ENCODE measurements at regions of chr11 and their contacts with region 1.

Region 1: GRCh38 chr11:63681321-63682049 is at the start of gene RTN3:
- DNase-seq: peak; percentile 97 to 99 (median 98)
- ATAC-seq: peak; percentile 95
- H3K4me3 ChIP-seq: peak within 1 kb of the TSS; percentile 86
- H3K4me3 Mint-ChIP-seq: peak within 1 kb of the TSS; percentile 89 to 97 (median 94)
- H3K27ac ChIP-seq: peak within 1 kb of the TSS; percentile 69
- H3K27ac Mint-ChIP-seq: peak within 1 kb of the TSS; percentile 50 to 97 (median 83)
- H3K4me1 ChIP-seq: peaks cover 6 to 17% of the 10 kb centered on the region in 2 donors
- H3K4me1 Mint-ChIP-seq: peaks cover 20 to 30% (median 27%) of the 10 kb centered on the region in 7 donors
- H3K27me3 ChIP-seq: no peaks in the 10 kb centered on the region
- H3K27me3 Mint-ChIP-seq: peaks cover 0 to 12% (median 0%) of the 10 kb centered on the region in 5 donors
- total RNA-seq, gene RTN3: 20.8 to 65.7 (median 34.4) TPM

Region 2: GRCh38 chr11:63553741-63554151 is 127.7 kb before region 1 on chr11:
- CTCF ChIA-PET with region 1: interaction called, 3 read pairs
- POLR2A ChIA-PET with region 1: no interaction called
- intact Hi-C with region 1: loop called in 1 of 2 experiments (anchors 5 kb)
- DNase-seq: peak in 7 of 9 donors; percentile 41 to 61 (median 53)
- ATAC-seq: peak; percentile 85
- H3K4me3 ChIP-seq: peak overlapping the region; percentile 51
- H3K4me3 Mint-ChIP-seq: peak overlapping the region; percentile 78 to 95 (median 88)
- H3K27ac ChIP-seq: peak overlapping the region; percentile 54
- H3K27ac Mint-ChIP-seq: peak overlapping the region; percentile 88 to 100 (median 96)
- H3K4me1 ChIP-seq: peaks cover 35 to 51% of the 10 kb centered on the region in 2 donors
- H3K4me1 Mint-ChIP-seq: peaks cover 33 to 81% (median 77%) of the 10 kb centered on the region in 7 donors
- H3K27me3 ChIP-seq: no peaks in the 10 kb centered on the region
- H3K27me3 Mint-ChIP-seq: no peaks in the 10 kb centered on the region

Region 3: GRCh38 chr11:63738720-63739360 is 57.4 kb after region 1 on chr11:
- CTCF ChIA-PET with region 1: interaction called, 3 read pairs
- POLR2A ChIA-PET with region 1: interaction called, 3 read pairs
- intact Hi-C with region 1: loop called in 1 of 2 experiments (anchors 1 kb)
- DNase-seq: peak in 8 of 9 donors; percentile 23 to 64 (median 46)
- ATAC-seq: peak; percentile 70
- H3K4me3 ChIP-seq: no peak overlapping the region
- H3K4me3 Mint-ChIP-seq: no peak overlapping the region
- H3K27ac ChIP-seq: no peak overlapping the region
- H3K27ac Mint-ChIP-seq: peak overlapping the region in 3 of 9 donors; percentile 29 to 67 (median 45)
- H3K4me1 ChIP-seq: no peaks in the 10 kb centered on the region
- H3K4me1 Mint-ChIP-seq: peaks cover 3 to 8% (median 4%) of the 10 kb centered on the region in 7 donors
- H3K27me3 ChIP-seq: no peaks in the 10 kb centered on the region
- H3K27me3 Mint-ChIP-seq: no peaks in the 10 kb centered on the region

Region 4: GRCh38 chr11:63768237-63769043 is 87.0 kb after region 1 on chr11 and contains the start of gene ZFTA:
- CTCF ChIA-PET with region 1: interaction called, 3 read pairs
- POLR2A ChIA-PET with region 1: no interaction called
- intact Hi-C with region 1: loop called in 1 of 2 experiments (anchors 5 kb)
- DNase-seq: peak; percentile 34 to 79 (median 54)
- ATAC-seq: peak; percentile 84
- H3K4me3 ChIP-seq: peak within 1 kb of the TSS; percentile 77
- H3K4me3 Mint-ChIP-seq: peak within 1 kb of the TSS; percentile 87 to 99 (median 92)
- H3K27ac ChIP-seq: peak within 1 kb of the TSS; percentile 60
- H3K27ac Mint-ChIP-seq: peak within 1 kb of the TSS; percentile 34 to 94 (median 83)
- H3K4me1 ChIP-seq: peaks cover 6 to 9% of the 10 kb centered on the region in 2 donors
- H3K4me1 Mint-ChIP-seq: peaks cover 6 to 14% (median 8%) of the 10 kb centered on the region in 7 donors
- H3K27me3 ChIP-seq: peaks cover 0 to 9% of the 10 kb centered on the region in 2 donors
- H3K27me3 Mint-ChIP-seq: peaks cover 0 to 35% (median 9%) of the 10 kb centered on the region in 5 donors
- total RNA-seq, gene ZFTA: 2.1 to 3.6 (median 2.7) TPM

Region 5: GRCh38 chr11:63802637-63803414 is 121.3 kb after region 1 on chr11:
- CTCF ChIA-PET with region 1: no interaction called
- POLR2A ChIA-PET with region 1: no interaction called
- intact Hi-C with region 1: no loop called
- DNase-seq: no peak
- ATAC-seq: no peak
- H3K4me3 ChIP-seq: no peak overlapping the region
- H3K4me3 Mint-ChIP-seq: no peak overlapping the region
- H3K27ac ChIP-seq: no peak overlapping the region
- H3K27ac Mint-ChIP-seq: no peak overlapping the region
- H3K4me1 ChIP-seq: no peaks in the 10 kb centered on the region
- H3K4me1 Mint-ChIP-seq: peaks cover 0 to 2% (median 0%) of the 10 kb centered on the region in 7 donors
- H3K27me3 ChIP-seq: no peaks in the 10 kb centered on the region
- H3K27me3 Mint-ChIP-seq: peaks cover 0 to 16% (median 4%) of the 10 kb centered on the region in 5 donors

Region 6: DNA sequence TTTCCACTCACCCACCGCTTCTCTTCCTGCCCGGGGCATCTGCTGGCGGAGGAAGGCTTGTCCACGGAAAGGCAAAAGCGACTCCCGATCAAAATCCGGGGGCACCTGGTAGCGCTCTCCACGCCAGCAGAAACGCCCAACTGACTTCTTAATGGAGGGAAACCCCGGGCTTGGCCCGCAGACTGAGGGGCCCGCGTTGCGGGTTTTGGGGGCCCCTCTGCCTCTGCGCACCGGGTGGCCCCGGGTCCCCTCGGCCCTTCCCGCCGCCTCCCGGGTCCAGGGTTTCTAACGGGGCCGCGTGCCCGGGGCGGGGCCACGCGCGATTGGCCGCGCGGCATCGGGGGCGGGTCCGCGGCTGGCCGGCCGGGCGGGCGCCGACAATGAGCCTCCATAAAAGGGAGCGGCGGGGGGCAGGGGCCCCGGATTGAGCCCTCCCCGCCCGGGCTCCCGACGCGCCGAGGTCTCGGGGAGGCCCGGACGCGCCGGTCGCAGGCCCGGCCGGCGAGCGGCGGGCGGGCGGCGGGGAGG is 131.6 kb after region 1 on chr11 and contains the start of gene SPINDOC:
- CTCF ChIA-PET with region 1: no interaction called
- POLR2A ChIA-PET with region 1: no interaction called
- intact Hi-C with region 1: loop called in 1 of 2 experiments (anchors 5 kb)
- DNase-seq: peak; percentile 17 to 90 (median 36)
- ATAC-seq: peak; percentile 94
- H3K4me3 ChIP-seq: peak within 1 kb of the TSS; percentile 65
- H3K4me3 Mint-ChIP-seq: peak within 1 kb of the TSS; percentile 71 to 86 (median 80)
- H3K27ac ChIP-seq: peak within 1 kb of the TSS; percentile 69
- H3K27ac Mint-ChIP-seq: peak within 1 kb of the TSS in 7 of 9 donors; percentile 5 to 63 (median 29)
- H3K4me1 ChIP-seq: peaks cover 4 to 6% of the 10 kb centered on the region in 2 donors
- H3K4me1 Mint-ChIP-seq: peaks cover 6 to 32% (median 21%) of the 10 kb centered on the region in 7 donors
- H3K27me3 ChIP-seq: no peaks in the 10 kb centered on the region
- H3K27me3 Mint-ChIP-seq: no peaks in the 10 kb centered on the region
- total RNA-seq, gene SPINDOC: 6.6 to 42.2 (median 9.3) TPM

Region 7: DNA sequence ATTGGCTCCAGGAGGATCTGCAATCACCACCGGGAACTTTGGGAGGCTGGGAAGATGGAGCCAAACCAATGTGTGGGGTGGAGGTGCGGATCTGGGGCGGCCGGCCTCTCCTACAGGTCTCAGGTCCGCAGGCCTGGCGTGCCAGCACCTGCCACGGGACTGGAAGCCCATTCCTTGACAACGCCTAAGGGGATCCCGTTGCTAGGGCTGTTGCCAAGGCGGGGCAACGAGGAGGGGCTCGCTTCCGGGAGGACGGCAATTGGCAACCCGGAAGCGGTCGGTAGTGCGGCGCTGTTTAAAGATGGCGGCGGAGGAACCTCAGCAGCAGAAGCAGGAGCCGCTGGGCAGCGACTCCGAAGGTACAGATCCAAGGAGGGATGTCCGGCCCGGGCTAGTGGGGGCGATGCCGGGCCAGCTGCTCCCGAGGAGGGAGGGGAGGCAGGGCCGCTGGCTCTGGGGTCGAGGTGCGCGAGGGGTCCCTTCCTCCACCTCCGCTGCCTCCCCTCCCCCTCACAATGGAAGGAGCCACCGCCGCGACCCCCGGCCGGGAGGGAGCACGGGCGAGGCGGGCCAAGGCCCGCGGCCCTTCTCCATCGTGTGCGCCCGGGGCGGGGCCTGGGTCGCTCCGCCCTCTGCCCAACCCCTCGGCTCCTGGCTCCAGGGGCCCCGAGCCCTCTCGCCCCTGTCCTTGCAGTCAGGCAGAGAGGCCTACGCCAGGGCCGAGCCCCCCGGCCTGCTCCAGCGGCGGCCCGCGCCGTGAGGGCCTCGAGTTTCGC is 304.9 kb after region 1 on chr11 and contains the start of gene OTUB1:
- CTCF ChIA-PET with region 1: no interaction called
- POLR2A ChIA-PET with region 1: no interaction called
- intact Hi-C with region 1: loop called in 1 of 2 experiments (anchors 5 kb)
- DNase-seq: peak; percentile 64 to 86 (median 83)
- ATAC-seq: peak; percentile 94
- H3K4me3 ChIP-seq: peak within 1 kb of the TSS; percentile 100
- H3K4me3 Mint-ChIP-seq: peak within 1 kb of the TSS; percentile 91 to 99 (median 97)
- H3K27ac ChIP-seq: peak within 1 kb of the TSS; percentile 89
- H3K27ac Mint-ChIP-seq: peak within 1 kb of the TSS; percentile 95 to 99 (median 98)
- H3K4me1 ChIP-seq: peaks cover 14 to 20% of the 10 kb centered on the region in 2 donors
- H3K4me1 Mint-ChIP-seq: peaks cover 11 to 40% (median 35%) of the 10 kb centered on the region in 7 donors
- H3K27me3 ChIP-seq: no peaks in the 10 kb centered on the region
- H3K27me3 Mint-ChIP-seq: no peaks in the 10 kb centered on the region
- total RNA-seq, gene OTUB1: 59.4 to 99.0 (median 72.5) TPM

Measured in naive thymus-derived CD4-positive, alpha-beta T cell (primary cell).